PC-9 (cell line): ENCODE measurements at regions of chrX and their contacts with region 1.

Region 1: GRCh38 chrX:84046403-84046984 is 141.5 kb downstream of the RPS6KA6 start:
- DNase-seq: no peak
- H3K4me3 ChIP-seq: no peak overlapping the region
- H3K27ac ChIP-seq: no peak overlapping the region
- H3K4me1 ChIP-seq: no peaks in the 10 kb centered on the region
- H3K27me3 ChIP-seq: no peaks in the 10 kb centered on the region
- CTCF ChIP-seq: peak; percentile 88

Region 2: GRCh38 chrX:84248226-84248625 is 201.7 kb after region 1 on chrX:
- CTCF ChIA-PET with region 1: interaction called, 11 read pairs
- POLR2A ChIA-PET with region 1: no interaction called
- intact Hi-C with region 1: no loop called
- DNase-seq: peak in 1 of 2 experiments; percentile 35
- H3K4me3 ChIP-seq: no peak overlapping the region
- H3K27ac ChIP-seq: no peak overlapping the region
- H3K4me1 ChIP-seq: no peaks in the 10 kb centered on the region
- H3K27me3 ChIP-seq: no peaks in the 10 kb centered on the region
- CTCF ChIP-seq: no peak

Region 3: DNA sequence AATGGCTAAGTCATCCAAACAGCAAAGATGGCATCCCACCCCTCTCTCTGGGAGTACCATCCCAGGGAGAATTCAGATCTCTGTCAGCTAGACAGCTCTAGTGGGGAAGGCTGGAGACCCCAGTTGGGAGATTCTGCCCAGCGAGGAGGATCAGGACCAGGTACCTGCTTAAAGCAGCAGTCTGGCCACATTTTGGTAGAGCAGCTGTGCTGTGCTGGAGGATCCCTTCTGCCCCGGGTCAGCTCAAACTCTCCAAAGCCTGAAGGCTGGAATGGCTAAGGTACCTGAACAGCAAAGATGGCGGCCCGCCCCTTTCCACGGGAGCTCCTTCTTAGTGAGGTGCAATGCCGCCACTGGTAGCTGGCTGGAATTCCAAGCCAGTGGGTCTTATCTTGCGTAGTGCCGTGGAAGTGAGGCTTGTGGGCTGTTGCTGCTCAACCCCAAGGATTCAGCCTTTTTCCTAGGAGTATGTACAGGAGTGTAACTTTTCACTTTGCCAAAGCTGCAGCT is 1157.0 kb after region 1 on chrX:
- CTCF ChIA-PET with region 1: no interaction called
- POLR2A ChIA-PET with region 1: no interaction called
- intact Hi-C with region 1: no loop called
- DNase-seq: no peak
- H3K4me3 ChIP-seq: no peak overlapping the region
- H3K27ac ChIP-seq: no peak overlapping the region
- H3K4me1 ChIP-seq: no peaks in the 10 kb centered on the region
- H3K27me3 ChIP-seq: no peaks in the 10 kb centered on the region
- CTCF ChIP-seq: no peak